RWPE1 (cell line): ENCODE measurements at regions of chr6 and their contacts with region 1.

Region 1: DNA sequence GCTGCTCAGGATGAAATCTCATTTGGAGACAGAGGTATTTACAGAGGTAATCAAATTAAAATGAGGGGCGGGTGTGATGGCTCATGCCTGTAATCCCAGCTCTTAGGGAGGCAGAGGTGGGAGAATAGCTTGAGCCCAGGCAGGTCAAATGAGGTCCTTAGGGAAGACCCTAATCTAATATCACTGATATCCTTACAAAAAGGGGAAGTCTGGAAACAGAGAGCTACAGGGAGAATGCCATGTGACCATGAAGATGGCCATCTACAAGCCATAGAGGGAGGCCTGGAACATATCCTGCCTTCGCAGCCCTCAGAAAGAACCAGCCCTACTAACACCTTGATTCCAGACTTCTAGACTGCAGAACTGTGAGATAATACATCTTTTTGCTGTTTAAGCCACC is 8.3 kb downstream of the MTCL3 start:
- DNase-seq: no peak
- H3K27ac ChIP-seq: no peak overlapping the region
- CTCF ChIP-seq: no peak

Region 2: GRCh38 chr6:127403636-127404035 is 107.2 kb before region 1 on chr6:
- CTCF ChIA-PET with region 1: no interaction called
- POLR2A ChIA-PET with region 1: no interaction called
- DNase-seq: no peak
- H3K27ac ChIP-seq: no peak overlapping the region
- CTCF ChIP-seq: no peak

Region 3: DNA sequence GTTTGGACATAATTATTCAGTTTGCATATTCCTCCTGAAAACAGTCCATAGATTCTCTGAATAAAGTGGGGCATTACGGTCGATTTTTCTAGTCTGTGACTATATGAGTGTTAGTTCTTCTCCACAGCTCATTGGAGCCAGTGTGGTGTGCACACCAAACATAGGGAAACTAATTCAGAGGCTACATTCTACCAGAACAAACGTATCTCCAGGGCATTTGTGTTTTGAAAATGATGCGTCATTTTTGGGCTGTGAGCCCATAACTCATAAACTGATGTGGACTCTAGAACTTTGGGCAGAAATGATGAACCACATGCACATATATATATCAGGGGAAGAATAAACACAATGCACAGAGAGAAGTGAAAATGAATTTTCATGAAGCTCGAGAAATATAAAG is 107.9 kb after region 1 on chr6:
- CTCF ChIA-PET with region 1: interaction called, 12 read pairs
- POLR2A ChIA-PET with region 1: no interaction called
- DNase-seq: peak; percentile 38
- H3K27ac ChIP-seq: no peak overlapping the region
- CTCF ChIP-seq: no peak